GM10248 (cell line): ENCODE measurements at regions of chr1 and their contacts with region 1.

Region 1: GRCh38 chr1:179002552-179003345 is 22.9 kb upstream of the FAM20B start:
- DNase-seq: peak; percentile 66
- CTCF ChIP-seq: peak; percentile 90

Region 2: DNA sequence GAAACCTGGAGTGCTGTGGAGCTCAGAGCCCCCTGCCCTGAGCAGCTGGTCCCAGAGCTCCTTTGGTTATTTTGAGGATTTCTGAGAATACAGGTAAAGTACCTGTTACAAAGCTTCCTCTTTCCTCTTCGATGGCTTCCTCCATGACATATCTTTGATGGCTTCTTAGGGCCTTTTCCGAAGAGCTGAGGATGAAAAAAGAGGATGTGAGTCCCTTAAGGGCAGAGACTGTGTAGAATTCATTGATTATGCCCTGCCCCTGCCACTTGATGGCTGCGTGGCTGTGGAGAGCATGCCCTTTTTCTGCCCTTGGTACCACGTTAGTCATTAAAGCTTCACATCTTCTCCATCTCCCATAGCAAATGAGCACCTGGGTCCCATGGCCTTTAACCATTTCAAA is 475.6 kb before region 1 on chr1:
- CTCF ChIA-PET with region 1: interaction called, 91 read pairs
- POLR2A ChIA-PET with region 1: no interaction called
- DNase-seq: no peak
- CTCF ChIP-seq: no peak

Region 3: DNA sequence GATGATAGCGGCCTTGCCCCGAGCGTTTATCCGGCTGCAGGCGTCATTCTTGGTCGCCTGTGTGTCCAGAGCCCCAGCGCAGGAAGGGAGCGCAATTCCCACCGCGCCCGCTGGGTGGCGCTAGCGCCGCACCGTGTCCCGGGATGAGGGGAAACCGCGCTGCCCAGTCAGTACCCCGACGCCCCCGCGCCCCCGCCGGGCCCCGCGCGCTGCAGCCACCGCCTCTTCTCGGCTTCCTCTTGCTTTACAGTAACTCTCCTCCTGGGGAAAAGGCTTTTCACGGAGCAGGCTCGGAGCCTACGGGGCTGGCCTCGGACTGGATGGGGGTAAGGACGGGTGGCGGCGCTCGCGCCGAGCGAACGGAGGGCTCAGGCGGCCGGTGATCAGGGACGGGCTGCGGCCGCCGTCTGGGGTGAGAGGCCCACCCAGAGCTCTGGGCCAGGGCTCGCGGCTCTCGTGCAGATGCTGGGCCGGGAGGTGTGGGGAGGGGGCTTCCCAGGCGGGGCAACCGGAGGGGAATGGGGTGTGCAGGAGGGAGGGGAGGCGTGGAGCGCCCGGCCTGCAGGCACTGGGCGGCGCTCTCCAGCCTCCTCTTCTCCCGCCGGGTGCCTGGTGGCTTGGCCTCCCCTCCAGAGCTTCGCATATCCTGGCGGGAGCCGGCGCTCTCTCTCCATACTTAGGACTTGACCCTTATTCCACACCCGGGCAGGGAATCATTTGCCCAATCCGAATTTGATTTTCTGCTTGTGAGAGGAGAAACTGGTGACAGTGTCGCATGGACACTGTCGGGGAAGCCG is 460.0 kb before region 1 on chr1:
- CTCF ChIA-PET with region 1: interaction called, 91 read pairs
- POLR2A ChIA-PET with region 1: no interaction called
- DNase-seq: peak; percentile 89
- CTCF ChIP-seq: peak; percentile 99

Region 4: GRCh38 chr1:178768423-178768822 is 234.3 kb before region 1 on chr1:
- CTCF ChIA-PET with region 1: interaction called, 30 read pairs
- POLR2A ChIA-PET with region 1: no interaction called
- DNase-seq: peak; percentile 46
- CTCF ChIP-seq: peak; percentile 80

Region 5: GRCh38 chr1:178810585-178810984 is 192.2 kb before region 1 on chr1:
- CTCF ChIA-PET with region 1: interaction called, 14 read pairs
- POLR2A ChIA-PET with region 1: no interaction called
- DNase-seq: no peak
- CTCF ChIP-seq: no peak

Region 6: DNA sequence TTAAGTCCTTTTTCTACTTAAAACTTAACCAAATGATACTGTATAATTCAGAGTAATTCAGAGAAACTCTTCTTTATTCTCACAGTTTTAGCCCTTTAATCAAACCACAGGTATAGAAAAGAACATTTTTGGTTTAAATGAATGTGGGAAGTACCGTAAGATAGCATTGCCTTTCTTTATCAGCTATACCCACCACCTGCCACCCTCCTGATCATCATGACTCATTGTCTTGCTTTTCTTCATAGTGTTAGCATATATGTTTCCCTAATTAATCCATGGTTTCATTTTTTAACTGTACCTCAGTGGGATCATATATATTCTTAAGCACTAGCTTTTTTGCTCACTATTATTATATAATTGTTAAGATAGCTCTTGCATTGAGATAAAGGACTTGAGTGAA is 104.3 kb before region 1 on chr1:
- CTCF ChIA-PET with region 1: no interaction called
- POLR2A ChIA-PET with region 1: no interaction called
- DNase-seq: no peak
- CTCF ChIP-seq: no peak

Region 7: GRCh38 chr1:178986204-178986603 is 16.5 kb before region 1 on chr1:
- CTCF ChIA-PET with region 1: no interaction called
- POLR2A ChIA-PET with region 1: no interaction called
- DNase-seq: no peak
- CTCF ChIP-seq: no peak

Region 8: GRCh38 chr1:179021873-179022272 is 19.1 kb after region 1 on chr1:
- CTCF ChIA-PET with region 1: interaction called, 11 read pairs
- POLR2A ChIA-PET with region 1: no interaction called
- DNase-seq: no peak
- CTCF ChIP-seq: no peak

Region 9: GRCh38 chr1:179066471-179066870 is 63.7 kb after region 1 on chr1:
- CTCF ChIA-PET with region 1: no interaction called
- POLR2A ChIA-PET with region 1: no interaction called
- DNase-seq: no peak
- CTCF ChIP-seq: no peak